Spleen (tissue), 13 donors: ENCODE measurements at regions of chr7 and their contacts with region 1.

Region 1: GRCh38 chr7:10939911-10940703 is 33.6 kb upstream of the PHF14 start:
- DNase-seq: peak; percentile 97
- H3K4me3 ChIP-seq: peak overlapping the region; percentile 73 to 90 (median 84)
- H3K27ac ChIP-seq: peak overlapping the region; percentile 89 to 96 (median 93)
- H3K4me1 ChIP-seq: peaks cover 11 to 59% (median 33%) of the 10 kb centered on the region in 6 donors
- H3K27me3 ChIP-seq: no peaks in the 10 kb centered on the region
- CTCF ChIP-seq: peak in 2 of 11 experiments; percentile 13 to 25
- POLR2A ChIP-seq: peak in 2 of 3 donors; percentile 34 to 82

Region 2: GRCh38 chr7:10973061-10973944 is 33.2 kb after region 1 on chr7 and contains the start of gene PHF14:
- intact Hi-C with region 1: loop called (anchors 5 kb)
- DNase-seq: peak; percentile 98
- H3K4me3 ChIP-seq: peak within 1 kb of the TSS; percentile 55 to 89 (median 75)
- H3K27ac ChIP-seq: peak within 1 kb of the TSS; percentile 76 to 91 (median 88)
- H3K4me1 ChIP-seq: peaks cover 16 to 36% (median 31%) of the 10 kb centered on the region in 6 donors
- H3K27me3 ChIP-seq: no peaks in the 10 kb centered on the region
- CTCF ChIP-seq: no peak
- POLR2A ChIP-seq: peak in 1 of 3 donors; percentile 29
- total RNA-seq, gene PHF14: 36.9 to 59.1 (median 41.3) TPM